ENCODE measurements at regions of chr19 and their contacts with region 1.

Region 1: DNA sequence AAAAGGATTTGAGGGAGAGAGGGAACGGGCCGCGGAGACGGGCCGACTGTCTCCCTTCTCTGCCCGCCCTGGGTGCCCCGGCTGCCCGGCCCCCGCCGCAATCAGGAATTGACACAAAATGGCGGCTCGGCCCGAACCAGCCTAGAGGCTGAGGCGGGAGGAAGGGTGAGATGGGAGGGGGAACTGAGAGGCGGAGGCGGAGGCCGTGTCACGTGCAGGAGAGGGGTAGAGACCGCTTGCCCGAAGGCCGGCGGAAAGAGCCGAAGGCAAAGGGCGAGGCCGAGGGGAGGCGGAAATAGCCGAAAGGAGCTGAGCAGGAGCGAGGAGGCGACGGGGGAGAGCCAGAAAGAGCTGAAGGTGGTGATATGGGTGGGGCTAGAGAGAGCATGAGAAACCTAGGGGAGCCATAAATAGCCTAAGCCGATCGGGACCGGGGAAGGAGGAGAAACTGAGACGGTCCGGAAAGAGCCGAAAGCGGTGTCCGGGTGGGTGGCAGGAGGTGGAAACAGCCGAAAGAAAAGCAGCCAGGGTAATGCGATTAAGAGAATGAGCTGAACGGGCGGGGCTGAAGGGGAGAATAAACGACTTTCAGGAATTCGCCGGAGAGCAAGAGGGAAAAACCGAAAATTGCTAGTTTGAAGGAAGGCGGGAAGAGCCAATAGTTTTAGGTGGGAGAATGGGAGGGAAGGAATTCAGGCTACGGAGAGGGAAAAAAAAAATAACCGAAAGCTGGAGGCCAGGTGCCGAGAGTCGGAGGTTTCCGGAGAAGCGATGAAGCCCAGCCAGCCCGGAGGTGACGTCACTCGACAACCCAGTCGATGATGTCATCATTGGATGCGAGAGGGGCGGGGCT is at the start of gene ZC3H4:
- DNase-seq: peak; percentile 98
- ATAC-seq: peak; percentile 82
- H3K4me3 Mint-ChIP-seq: peak within 1 kb of the TSS; percentile 100
- H3K27ac Mint-ChIP-seq: peak within 1 kb of the TSS; percentile 100
- H3K4me1 Mint-ChIP-seq: peaks cover 38% of the 10 kb centered on the region
- H3K27me3 Mint-ChIP-seq: no peaks in the 10 kb centered on the region
- CTCF ChIP-seq: no peak
- total RNA-seq, gene ZC3H4: 83.8 and 89.1 TPM in 2 replicates

Region 2: GRCh38 chr19:46717034-46717723 is 396.0 kb before region 1 on chr19 and contains the start of gene PRKD2:
- CTCF ChIA-PET with region 1: no interaction called
- POLR2A ChIA-PET with region 1: interaction called, 15 read pairs
- intact Hi-C with region 1: loop called (anchors 1 kb)
- DNase-seq: peak; percentile 92
- ATAC-seq: peak; percentile 47
- H3K4me3 Mint-ChIP-seq: peak within 1 kb of the TSS; percentile 94
- H3K27ac Mint-ChIP-seq: peak within 1 kb of the TSS; percentile 97
- H3K4me1 Mint-ChIP-seq: peaks cover 76% of the 10 kb centered on the region
- H3K27me3 Mint-ChIP-seq: no peaks in the 10 kb centered on the region
- CTCF ChIP-seq: no peak
- total RNA-seq, gene PRKD2: 157 and 191 TPM in 2 replicates

Region 3: GRCh38 chr19:46967578-46968027 is 145.6 kb before region 1 on chr19:
- CTCF ChIA-PET with region 1: no interaction called
- POLR2A ChIA-PET with region 1: no interaction called
- intact Hi-C with region 1: no loop called
- DNase-seq: no peak
- ATAC-seq: no peak
- H3K4me3 Mint-ChIP-seq: no peak overlapping the region
- H3K27ac Mint-ChIP-seq: no peak overlapping the region
- H3K4me1 Mint-ChIP-seq: no peaks in the 10 kb centered on the region
- H3K27me3 Mint-ChIP-seq: no peaks in the 10 kb centered on the region
- CTCF ChIP-seq: no peak

Region 4: GRCh38 chr19:47075179-47075810 is 37.9 kb before region 1 on chr19:
- CTCF ChIA-PET with region 1: interaction called, 7 read pairs
- POLR2A ChIA-PET with region 1: interaction called, 27 read pairs
- intact Hi-C with region 1: loop called (anchors 5 kb)
- DNase-seq: no peak
- ATAC-seq: no peak
- H3K4me3 Mint-ChIP-seq: no peak overlapping the region
- H3K27ac Mint-ChIP-seq: no peak overlapping the region
- H3K4me1 Mint-ChIP-seq: peaks cover 4% of the 10 kb centered on the region
- H3K27me3 Mint-ChIP-seq: no peaks in the 10 kb centered on the region
- CTCF ChIP-seq: no peak

Region 5: DNA sequence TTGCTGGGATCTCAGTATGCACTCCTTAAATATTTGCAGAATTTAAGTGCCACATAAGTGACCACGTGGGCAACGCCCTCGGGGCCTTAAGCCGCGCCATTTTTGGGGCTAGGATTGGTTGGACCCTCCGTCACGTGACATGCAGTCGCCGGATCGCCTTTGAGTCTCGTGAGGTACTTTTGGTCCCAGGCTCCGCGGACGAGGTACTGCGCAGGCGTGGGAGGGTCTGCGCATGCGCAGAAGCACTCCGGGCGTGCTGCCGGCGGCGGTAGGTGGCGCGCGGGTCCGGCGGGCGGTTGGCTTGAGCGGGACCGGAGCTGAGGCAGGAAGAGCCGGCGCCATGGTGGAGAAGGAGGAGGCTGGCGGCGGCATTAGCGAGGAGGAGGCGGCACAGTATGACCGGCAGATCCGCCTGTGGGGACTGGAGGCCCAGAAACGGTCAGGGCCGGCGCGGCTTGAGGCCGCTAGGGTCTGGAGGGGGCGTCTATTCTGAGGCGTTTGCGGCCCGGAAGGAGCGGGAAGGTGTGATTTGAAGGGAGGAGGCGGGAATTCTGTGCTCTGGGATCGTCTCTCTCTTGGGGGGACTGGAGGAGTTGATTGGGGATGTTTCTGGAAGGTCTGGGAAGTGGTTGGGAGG is 17.5 kb after region 1 on chr19 and contains the start of gene SAE1:
- CTCF ChIA-PET with region 1: interaction called, 6 read pairs
- POLR2A ChIA-PET with region 1: interaction called, 60 read pairs
- intact Hi-C with region 1: loop called (anchors 1 kb)
- DNase-seq: peak; percentile 94
- ATAC-seq: peak; percentile 89
- H3K4me3 Mint-ChIP-seq: peak within 1 kb of the TSS; percentile 99
- H3K27ac Mint-ChIP-seq: peak within 1 kb of the TSS; percentile 94
- H3K4me1 Mint-ChIP-seq: peaks cover 44% of the 10 kb centered on the region
- H3K27me3 Mint-ChIP-seq: no peaks in the 10 kb centered on the region
- CTCF ChIP-seq: no peak
- total RNA-seq, gene SAE1: 64.5 and 67.4 TPM in 2 replicates

Region 6: GRCh38 chr19:47176627-47177090 is 63.4 kb after region 1 on chr19:
- CTCF ChIA-PET with region 1: no interaction called
- POLR2A ChIA-PET with region 1: no interaction called
- intact Hi-C with region 1: no loop called
- DNase-seq: no peak
- ATAC-seq: no peak
- H3K4me3 Mint-ChIP-seq: no peak overlapping the region
- H3K27ac Mint-ChIP-seq: no peak overlapping the region
- H3K4me1 Mint-ChIP-seq: no peaks in the 10 kb centered on the region
- H3K27me3 Mint-ChIP-seq: no peaks in the 10 kb centered on the region
- CTCF ChIP-seq: no peak

Region 7: DNA sequence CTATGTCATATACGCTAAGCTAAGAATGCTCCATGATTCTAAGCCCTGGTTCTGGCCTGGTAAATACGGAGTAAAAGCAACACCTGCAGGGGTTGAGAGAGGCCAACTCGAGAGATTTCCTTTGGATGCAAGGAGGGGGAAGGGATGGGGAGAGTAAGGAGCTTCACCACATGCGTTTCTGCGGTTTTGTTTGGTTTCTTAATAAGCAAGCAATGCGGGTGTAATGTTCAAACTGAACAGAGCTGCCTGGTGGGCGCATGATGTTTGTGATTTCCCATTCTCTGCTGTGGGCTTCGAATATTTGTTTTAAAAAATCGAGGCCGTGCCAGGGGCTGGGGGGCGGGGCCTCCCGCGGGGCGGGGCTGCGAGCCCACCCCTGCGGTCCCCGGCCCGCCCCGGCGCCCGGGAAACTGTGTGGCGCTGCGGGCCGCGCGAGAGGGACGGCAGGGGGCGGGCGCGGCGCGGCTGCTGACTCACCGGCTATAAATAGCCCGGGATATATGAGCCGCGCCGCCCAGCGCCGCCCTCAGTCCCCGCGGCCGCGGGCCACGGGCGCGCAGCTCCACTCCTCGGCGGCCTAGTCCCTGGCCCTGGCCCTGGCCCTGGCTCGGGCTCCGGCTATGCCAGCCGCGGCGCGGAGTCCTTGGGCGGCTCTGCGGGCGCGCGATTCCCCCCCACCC is 112.7 kb after region 1 on chr19:
- CTCF ChIA-PET with region 1: no interaction called
- POLR2A ChIA-PET with region 1: interaction called, 53 read pairs
- intact Hi-C with region 1: loop called (anchors 1 kb)
- DNase-seq: peak; percentile 94
- ATAC-seq: peak; percentile 61
- H3K4me3 Mint-ChIP-seq: peak overlapping the region; percentile 85
- H3K27ac Mint-ChIP-seq: peak overlapping the region; percentile 89
- H3K4me1 Mint-ChIP-seq: peaks cover 16% of the 10 kb centered on the region
- H3K27me3 Mint-ChIP-seq: no peaks in the 10 kb centered on the region
- CTCF ChIP-seq: no peak

Region 8: GRCh38 chr19:47483800-47484690 is 370.8 kb after region 1 on chr19 and contains the start of gene KPTN:
- CTCF ChIA-PET with region 1: no interaction called
- POLR2A ChIA-PET with region 1: interaction called, 11 read pairs
- intact Hi-C with region 1: no loop called
- DNase-seq: peak; percentile 85
- ATAC-seq: peak; percentile 87
- H3K4me3 Mint-ChIP-seq: peak within 1 kb of the TSS; percentile 98
- H3K27ac Mint-ChIP-seq: peak within 1 kb of the TSS; percentile 99
- H3K4me1 Mint-ChIP-seq: peaks cover 42% of the 10 kb centered on the region
- H3K27me3 Mint-ChIP-seq: no peaks in the 10 kb centered on the region
- CTCF ChIP-seq: no peak
- total RNA-seq, gene KPTN: 8.0 and 8.7 TPM in 2 replicates